ENCODE measurements at regions of chr3 and their contacts with region 1.

Region 1: GRCh38 chr3:36904641-36905040 is 40.2 kb downstream of the TRANK1 start:
- DNase-seq: no peak
- ATAC-seq: no peak
- H3K4me3 Mint-ChIP-seq: no peak overlapping the region
- H3K27ac Mint-ChIP-seq: no peak overlapping the region
- H3K4me1 Mint-ChIP-seq: peaks cover 67% of the 10 kb centered on the region
- H3K27me3 Mint-ChIP-seq: no peaks in the 10 kb centered on the region

Region 2: GRCh38 chr3:36893137-36893557 is 11.5 kb before region 1 on chr3:
- CTCF ChIA-PET with region 1: interaction called, 16 read pairs
- DNase-seq: no peak
- ATAC-seq: peak; percentile 61
- H3K4me3 Mint-ChIP-seq: no peak overlapping the region
- H3K27ac Mint-ChIP-seq: peak overlapping the region; percentile 57
- H3K4me1 Mint-ChIP-seq: peaks cover 32% of the 10 kb centered on the region
- H3K27me3 Mint-ChIP-seq: no peaks in the 10 kb centered on the region